Thyroid gland (tissue), 4 donors: ENCODE measurements at regions of chr1 and their contacts with region 1.

Region 1: DNA sequence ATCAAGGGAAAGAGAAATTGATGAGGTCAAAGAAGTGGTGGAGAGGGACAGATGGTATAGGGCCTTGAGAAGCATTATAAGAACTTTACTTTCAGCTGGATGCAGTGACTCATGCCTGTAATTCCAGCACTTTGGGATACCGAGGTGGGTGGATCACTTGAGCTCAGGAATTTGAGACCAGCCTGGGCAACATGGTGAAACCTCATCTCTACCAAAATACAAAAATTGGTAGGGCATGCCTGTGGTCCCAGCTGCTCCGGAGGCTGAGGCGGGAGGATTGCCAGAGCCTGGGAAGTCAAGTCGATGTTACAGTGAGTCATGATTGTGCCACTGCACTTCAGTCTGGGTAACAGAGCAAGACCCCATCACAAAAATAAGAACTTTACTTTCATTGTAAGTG is 5.7 kb downstream of the TMEM50A start:
- DNase-seq: no peak
- H3K4me3 ChIP-seq: no peak overlapping the region
- H3K27ac ChIP-seq: no peak overlapping the region
- H3K4me1 ChIP-seq: peaks cover 13 to 15% of the 10 kb centered on the region in 2 donors
- H3K27me3 ChIP-seq: no peaks in the 10 kb centered on the region
- CTCF ChIP-seq: no peak
- POLR2A ChIP-seq: no peak

Region 2: GRCh38 chr1:25253911-25254310 is 90.0 kb before region 1 on chr1:
- intact Hi-C with region 1: loop called (anchors 10 kb)
- DNase-seq: no peak
- H3K4me3 ChIP-seq: no peak overlapping the region
- H3K27ac ChIP-seq: no peak overlapping the region
- H3K4me1 ChIP-seq: peaks cover 0 to 16% of the 10 kb centered on the region in 2 donors
- H3K27me3 ChIP-seq: no peaks in the 10 kb centered on the region
- CTCF ChIP-seq: no peak
- POLR2A ChIP-seq: no peak

Region 3: DNA sequence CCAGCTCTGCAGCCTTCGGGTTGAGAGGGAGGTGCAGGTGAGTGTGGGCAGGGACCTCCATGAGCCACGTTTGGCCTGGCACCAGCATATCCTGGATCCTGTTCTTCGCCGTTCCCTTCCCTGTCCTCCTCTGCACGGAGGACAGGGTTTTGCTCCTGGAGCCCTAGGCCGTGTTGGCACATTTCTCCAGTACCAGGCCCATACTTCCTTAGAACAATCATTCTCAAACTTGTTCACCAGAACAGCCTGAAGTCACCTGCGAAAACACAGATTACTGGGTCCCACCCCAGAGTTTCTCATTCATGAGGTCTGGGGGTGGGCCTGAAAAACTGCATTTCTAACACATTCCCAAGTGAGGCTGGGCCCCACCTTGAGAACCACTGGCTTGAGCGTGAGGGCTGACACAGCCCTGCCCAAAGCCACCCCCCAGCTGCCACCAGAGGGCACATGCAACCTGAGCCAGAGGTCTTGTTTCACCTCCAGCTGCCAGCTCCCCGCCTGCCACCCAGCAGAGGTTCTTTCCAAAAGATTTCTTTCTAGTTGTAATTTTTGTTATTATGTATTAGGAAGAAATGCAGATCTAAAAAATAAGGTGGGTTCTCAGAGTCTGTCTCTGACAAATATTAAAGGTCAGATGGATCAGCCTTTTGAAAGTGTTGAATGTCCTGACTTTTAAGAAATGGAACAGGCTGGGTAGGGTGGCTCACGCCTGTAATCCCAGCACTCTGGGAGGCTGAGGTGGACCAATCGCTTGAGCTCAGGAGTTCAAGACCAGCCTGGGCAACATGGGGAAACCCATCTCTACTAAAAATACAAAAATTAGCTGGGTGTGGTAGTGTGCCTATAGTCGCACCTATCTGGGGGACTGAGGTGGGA is 159.9 kb after region 1 on chr1:
- intact Hi-C with region 1: no loop called
- DNase-seq: peak; percentile 81 to 84
- H3K4me3 ChIP-seq: no peak overlapping the region
- H3K27ac ChIP-seq: no peak overlapping the region
- H3K4me1 ChIP-seq: peaks cover 21 to 37% of the 10 kb centered on the region in 2 donors
- H3K27me3 ChIP-seq: no peaks in the 10 kb centered on the region
- CTCF ChIP-seq: peak; percentile 25 to 78 (median 62)
- POLR2A ChIP-seq: no peak

Region 4: GRCh38 chr1:26161415-26162219 is 817.7 kb after region 1 on chr1:
- intact Hi-C with region 1: no loop called
- DNase-seq: peak; percentile 66 to 68
- H3K4me3 ChIP-seq: peak overlapping the region in 2 of 3 donors; percentile 25 to 49
- H3K27ac ChIP-seq: peak overlapping the region in 2 of 3 donors; percentile 36 to 45
- H3K4me1 ChIP-seq: peaks cover 13 to 17% of the 10 kb centered on the region in 2 donors
- H3K27me3 ChIP-seq: no peaks in the 10 kb centered on the region
- CTCF ChIP-seq: peak in 2 of 6 experiments; percentile 39 to 41
- POLR2A ChIP-seq: no peak